Mammary epithelial cell (primary cell): ENCODE measurements at regions of chr3 and their contacts with region 1.

Region 1: DNA sequence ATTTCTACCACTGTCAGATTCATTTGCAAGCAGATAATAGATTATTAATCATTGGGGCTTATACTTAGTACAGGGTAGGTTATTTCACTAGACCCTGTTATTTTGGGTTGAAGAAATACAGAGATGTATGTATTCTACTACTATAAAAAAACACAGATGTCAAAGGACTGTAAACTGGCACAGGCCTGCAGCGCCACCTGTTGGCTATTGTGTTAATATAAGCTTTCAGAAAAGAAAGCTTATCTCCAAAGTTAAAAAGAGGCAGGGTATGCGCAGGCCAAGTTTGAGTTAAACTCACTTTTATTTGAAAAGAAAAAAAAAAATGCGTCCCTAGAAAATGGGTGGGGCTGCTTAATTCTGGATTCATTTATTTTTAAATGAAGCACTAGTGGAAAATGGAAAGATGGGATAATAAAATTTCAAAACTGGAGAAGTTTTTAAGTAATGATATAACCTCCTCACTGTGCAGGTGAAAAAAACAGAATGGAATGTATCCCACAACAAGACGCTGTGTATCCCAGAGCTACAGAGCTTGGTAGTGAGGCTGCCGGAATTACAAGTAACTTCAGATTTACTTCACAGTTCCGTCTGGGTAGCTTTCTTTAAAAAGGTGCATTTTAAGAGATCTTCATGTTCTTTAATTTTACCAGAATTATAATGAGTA is 407.2 kb upstream of the TGFBR2 start:
- DNase-seq: peak; percentile 21
- H3K4me3 ChIP-seq: no peak overlapping the region
- H3K27ac ChIP-seq: no peak overlapping the region
- H3K4me1 ChIP-seq: peaks cover 12% of the 10 kb centered on the region
- H3K27me3 ChIP-seq: no peaks in the 10 kb centered on the region
- CTCF ChIP-seq: peak; percentile 75

Region 2: DNA sequence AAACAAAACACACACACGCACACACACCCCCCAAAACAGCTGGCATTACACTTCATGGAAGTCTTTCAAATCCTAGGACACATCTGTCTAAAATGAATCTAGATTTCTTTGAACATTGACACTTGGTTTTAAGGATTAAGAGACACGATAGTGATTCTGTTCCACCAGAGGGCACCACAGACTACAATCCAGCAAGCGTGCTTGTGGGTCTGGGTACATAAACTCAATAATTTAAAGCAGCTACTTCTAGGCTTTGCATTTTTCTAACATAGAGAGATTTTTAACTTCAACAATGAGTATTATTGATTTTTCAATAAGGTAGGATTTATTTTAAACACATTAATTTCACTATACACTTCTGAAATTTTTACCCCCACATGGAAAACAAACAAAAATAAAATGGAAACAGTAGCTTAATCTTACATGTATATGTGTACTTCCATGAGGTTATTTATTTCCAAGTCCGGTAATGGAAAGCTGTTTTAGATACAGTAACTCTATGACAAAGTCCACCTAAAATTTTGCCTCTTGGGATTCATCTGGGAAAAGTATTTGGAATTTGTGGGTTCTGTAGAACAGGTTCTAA is 156.9 kb before region 1 on chr3:
- CTCF ChIA-PET with region 1: interaction called, 10 read pairs
- dilution Hi-C with region 1: loop called (anchors 25 kb)
- in situ Hi-C with region 1: loop called (anchors 10 to 25 kb)
- intact Hi-C with region 1: loop called (anchors 1 kb)
- DNase-seq: peak; percentile 39
- H3K4me3 ChIP-seq: no peak overlapping the region
- H3K27ac ChIP-seq: no peak overlapping the region
- H3K4me1 ChIP-seq: no peaks in the 10 kb centered on the region
- H3K27me3 ChIP-seq: no peaks in the 10 kb centered on the region
- CTCF ChIP-seq: peak; percentile 72 to 75

Region 3: GRCh38 chr3:30135190-30135589 is 64.0 kb before region 1 on chr3:
- CTCF ChIA-PET with region 1: interaction called, 8 read pairs
- dilution Hi-C with region 1: no loop called
- in situ Hi-C with region 1: no loop called
- intact Hi-C with region 1: loop called (anchors 1 kb)
- DNase-seq: no peak
- H3K4me3 ChIP-seq: no peak overlapping the region
- H3K27ac ChIP-seq: no peak overlapping the region
- H3K4me1 ChIP-seq: no peaks in the 10 kb centered on the region
- H3K27me3 ChIP-seq: no peaks in the 10 kb centered on the region
- CTCF ChIP-seq: no peak

Region 4: DNA sequence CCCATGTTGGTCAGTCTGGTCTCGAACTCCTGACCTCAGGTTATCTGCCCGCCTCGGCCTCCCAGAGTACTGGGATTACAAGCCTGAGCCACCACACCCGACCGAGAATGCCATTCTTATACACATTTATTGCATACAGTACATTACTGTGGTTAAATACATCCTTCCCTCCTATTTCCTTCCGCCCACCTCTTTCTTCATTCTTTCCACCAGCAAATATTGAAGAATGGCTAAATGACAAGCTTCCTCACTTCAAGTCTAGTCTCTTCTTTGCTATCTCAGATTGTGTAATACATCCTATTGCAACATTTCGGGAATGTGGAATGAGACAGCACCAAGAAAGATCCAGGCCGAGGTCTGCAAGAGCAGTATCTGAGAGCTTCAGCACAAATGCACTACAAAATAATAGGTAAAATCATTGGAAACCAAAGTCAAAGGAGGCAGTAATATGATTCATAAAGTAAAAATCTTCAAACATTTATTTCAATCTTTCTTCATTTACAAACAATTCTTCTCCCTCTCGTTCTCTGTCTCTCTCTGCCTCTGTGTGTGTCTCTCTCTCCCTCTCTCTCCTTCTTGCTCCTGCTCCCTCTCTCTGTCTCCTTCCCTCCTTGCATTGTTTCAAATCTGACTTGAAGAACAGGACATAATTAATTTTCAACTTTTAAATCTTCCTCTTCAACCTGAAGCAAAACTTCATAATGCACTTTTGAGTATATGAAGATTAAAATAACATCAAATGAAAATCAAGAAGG is 312.5 kb after region 1 on chr3:
- CTCF ChIA-PET with region 1: interaction called, 5 read pairs
- dilution Hi-C with region 1: no loop called
- in situ Hi-C with region 1: no loop called
- intact Hi-C with region 1: loop called (anchors 2 kb)
- DNase-seq: peak; percentile 97
- H3K4me3 ChIP-seq: peak overlapping the region in 1 of 3 experiments; percentile 6
- H3K27ac ChIP-seq: peak overlapping the region; percentile 93
- H3K4me1 ChIP-seq: peaks cover 34% of the 10 kb centered on the region
- H3K27me3 ChIP-seq: no peaks in the 10 kb centered on the region
- CTCF ChIP-seq: no peak

Region 5: GRCh38 chr3:30693470-30694120 is 494.4 kb after region 1 on chr3:
- CTCF ChIA-PET with region 1: no interaction called
- dilution Hi-C with region 1: no loop called
- in situ Hi-C with region 1: no loop called
- intact Hi-C with region 1: loop called (anchors 1 kb)
- DNase-seq: peak; percentile 41
- H3K4me3 ChIP-seq: no peak overlapping the region
- H3K27ac ChIP-seq: no peak overlapping the region
- H3K4me1 ChIP-seq: peaks cover 24% of the 10 kb centered on the region
- H3K27me3 ChIP-seq: no peaks in the 10 kb centered on the region
- CTCF ChIP-seq: peak; percentile 74 to 82